Psoas muscle (tissue), 8 donors: ENCODE measurements at regions of chr22 and their contacts with region 1.

Region 1: GRCh38 chr22:23767673-23768548 is at the start of gene CHCHD10:
- DNase-seq: peak; percentile 89 to 95
- ATAC-seq: peak; percentile 78 to 87 (median 82)
- H3K4me3 ChIP-seq: peak within 1 kb of the TSS; percentile 79
- H3K27ac ChIP-seq: peak within 1 kb of the TSS; percentile 98
- H3K4me1 ChIP-seq: peaks cover 33% of the 10 kb centered on the region
- H3K27me3 ChIP-seq: no peaks in the 10 kb centered on the region
- CTCF ChIP-seq: peak; percentile 87
- total RNA-seq, gene CHCHD10: 659 to 1,066 (median 865) TPM

Region 2: DNA sequence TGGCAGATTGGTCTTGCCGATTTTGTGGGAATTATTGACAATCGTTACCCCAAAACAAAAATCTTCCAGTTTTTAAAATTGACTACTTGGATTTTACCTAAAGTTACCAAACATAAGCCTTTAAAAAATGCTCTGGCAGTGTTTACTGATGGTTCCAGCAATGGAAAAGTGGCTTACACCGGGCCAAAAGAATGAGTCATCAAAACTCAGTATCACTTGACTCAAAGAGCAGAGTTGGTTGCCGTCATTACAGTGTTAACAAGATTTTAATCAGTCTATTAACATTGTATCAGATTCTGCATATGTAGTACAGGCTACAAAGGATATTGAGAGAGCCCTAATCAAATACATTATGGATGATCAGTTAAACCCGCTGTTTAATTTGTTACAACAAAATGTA is 225.0 kb before region 1 on chr22:
- intact Hi-C with region 1: loop called (anchors 5 kb)
- DNase-seq: no peak
- ATAC-seq: no peak
- H3K4me3 ChIP-seq: no peak overlapping the region
- H3K27ac ChIP-seq: no peak overlapping the region
- H3K4me1 ChIP-seq: no peaks in the 10 kb centered on the region
- H3K27me3 ChIP-seq: no peaks in the 10 kb centered on the region
- CTCF ChIP-seq: no peak

Region 3: GRCh38 chr22:23608583-23608982 is 159.3 kb before region 1 on chr22:
- intact Hi-C with region 1: no loop called
- DNase-seq: no peak
- ATAC-seq: no peak
- H3K4me3 ChIP-seq: no peak overlapping the region
- H3K27ac ChIP-seq: no peak overlapping the region
- H3K4me1 ChIP-seq: no peaks in the 10 kb centered on the region
- H3K27me3 ChIP-seq: no peaks in the 10 kb centered on the region
- CTCF ChIP-seq: no peak

Region 4: DNA sequence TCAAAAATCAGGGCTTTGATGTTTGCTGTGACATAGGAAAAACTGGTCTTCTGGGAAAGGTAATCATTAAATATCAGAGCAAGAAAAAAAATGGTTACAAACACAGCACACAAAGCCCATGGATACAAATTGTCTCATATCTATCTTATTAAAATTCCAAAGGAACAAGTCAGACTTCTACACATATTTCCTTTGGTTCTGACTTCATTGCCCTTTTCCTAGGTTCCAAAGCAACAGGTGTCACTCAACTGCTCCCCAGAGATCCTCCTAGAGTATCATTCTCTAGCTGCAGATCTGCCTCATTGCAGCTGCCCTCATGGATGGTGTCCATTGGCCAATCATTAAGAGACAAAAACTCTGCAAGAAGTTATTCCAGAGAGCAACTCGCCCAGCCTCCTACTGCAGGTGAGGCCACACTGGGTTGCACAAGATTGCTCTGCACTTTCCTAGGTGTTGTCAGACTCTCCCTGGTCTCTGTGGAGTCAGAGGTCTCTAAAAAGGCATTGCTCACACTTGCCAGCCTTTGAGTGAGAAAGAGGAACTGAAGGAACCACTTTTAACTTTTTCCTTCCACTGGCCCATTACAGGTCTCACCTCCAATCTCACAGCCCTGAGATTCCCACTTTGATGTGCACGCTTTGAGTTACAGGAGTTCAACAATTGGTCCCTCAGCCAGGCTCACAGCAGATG is 141.5 kb before region 1 on chr22:
- intact Hi-C with region 1: loop called in 1 of 2 experiments (anchors 5 kb)
- DNase-seq: no peak
- ATAC-seq: no peak
- H3K4me3 ChIP-seq: no peak overlapping the region
- H3K27ac ChIP-seq: no peak overlapping the region
- H3K4me1 ChIP-seq: no peaks in the 10 kb centered on the region
- H3K27me3 ChIP-seq: no peaks in the 10 kb centered on the region
- CTCF ChIP-seq: no peak

Region 5: DNA sequence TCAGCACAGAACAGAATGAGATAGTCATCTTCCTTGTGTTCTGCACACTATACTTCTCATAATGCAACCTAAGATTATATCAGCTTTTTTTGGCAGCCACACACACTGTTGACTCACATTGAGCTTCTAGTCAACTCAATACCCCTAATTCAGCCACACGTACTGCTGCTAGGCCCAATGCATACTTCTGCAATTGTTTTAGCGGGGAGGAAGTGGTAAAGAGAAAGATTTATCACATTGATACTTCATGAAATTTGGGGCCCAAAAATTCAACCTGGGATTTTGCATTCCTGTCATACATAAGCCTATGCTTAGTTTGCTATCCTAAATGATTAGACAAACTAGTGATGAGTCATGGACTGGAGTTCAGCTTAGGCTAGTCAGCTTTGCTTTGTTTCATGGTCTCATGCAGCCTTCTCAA is 718.6 kb after region 1 on chr22:
- intact Hi-C with region 1: no loop called
- DNase-seq: no peak
- ATAC-seq: no peak
- H3K4me3 ChIP-seq: no peak overlapping the region
- H3K27ac ChIP-seq: no peak overlapping the region
- H3K4me1 ChIP-seq: peaks cover 7% of the 10 kb centered on the region
- H3K27me3 ChIP-seq: no peaks in the 10 kb centered on the region
- CTCF ChIP-seq: no peak